ENCODE measurements at regions of chr14 and their contacts with region 1.

Region 1: DNA sequence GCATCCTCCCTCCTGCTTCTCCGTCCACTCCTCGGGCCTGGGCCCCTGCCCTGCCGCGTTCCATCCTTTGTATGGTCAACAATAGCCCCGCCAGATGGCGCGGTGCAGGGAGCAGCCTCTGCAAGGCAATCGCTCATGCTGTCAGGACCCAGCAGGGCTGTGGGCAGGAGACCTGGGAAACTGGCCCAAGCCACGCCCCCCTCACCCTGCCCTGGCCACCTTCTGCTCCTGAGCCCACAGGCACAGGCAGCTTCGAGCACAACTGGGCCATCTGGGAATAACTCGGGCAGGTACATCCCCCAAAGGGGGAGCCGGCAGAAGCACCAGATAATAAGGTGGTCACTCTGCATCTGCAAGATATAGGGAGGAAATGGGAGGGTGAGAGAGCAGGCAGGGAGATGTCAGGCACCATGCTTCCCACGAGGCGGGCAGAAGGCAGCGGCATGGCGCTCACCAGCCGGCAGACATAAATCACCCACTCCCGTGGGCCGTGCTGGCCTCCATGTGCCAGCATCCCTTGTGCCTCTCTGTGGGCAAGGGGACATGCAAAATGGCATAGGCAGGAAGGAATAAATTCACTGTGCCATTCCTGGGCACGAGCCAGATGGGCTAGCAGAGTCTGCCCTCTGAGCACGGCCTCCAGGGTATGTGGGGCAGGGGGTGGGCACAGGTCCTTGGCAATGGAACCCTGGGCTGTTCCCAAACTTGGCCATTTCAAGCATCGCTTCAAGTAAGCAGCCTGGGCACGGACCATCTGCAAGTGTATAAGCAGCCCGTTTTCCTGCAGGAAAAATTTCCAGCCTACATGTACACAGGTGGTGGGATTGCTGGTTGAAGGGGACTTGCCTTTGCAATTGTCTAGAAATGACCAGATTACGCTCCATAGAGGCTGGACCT is 40.5 kb downstream of the CCDC85C start:
- H3K4me3 ChIP-seq: no peak overlapping the region
- H3K27ac ChIP-seq: no peak overlapping the region
- H3K4me1 ChIP-seq: peaks cover 29% of the 10 kb centered on the region
- CTCF ChIP-seq: peak; percentile 78

Region 2: DNA sequence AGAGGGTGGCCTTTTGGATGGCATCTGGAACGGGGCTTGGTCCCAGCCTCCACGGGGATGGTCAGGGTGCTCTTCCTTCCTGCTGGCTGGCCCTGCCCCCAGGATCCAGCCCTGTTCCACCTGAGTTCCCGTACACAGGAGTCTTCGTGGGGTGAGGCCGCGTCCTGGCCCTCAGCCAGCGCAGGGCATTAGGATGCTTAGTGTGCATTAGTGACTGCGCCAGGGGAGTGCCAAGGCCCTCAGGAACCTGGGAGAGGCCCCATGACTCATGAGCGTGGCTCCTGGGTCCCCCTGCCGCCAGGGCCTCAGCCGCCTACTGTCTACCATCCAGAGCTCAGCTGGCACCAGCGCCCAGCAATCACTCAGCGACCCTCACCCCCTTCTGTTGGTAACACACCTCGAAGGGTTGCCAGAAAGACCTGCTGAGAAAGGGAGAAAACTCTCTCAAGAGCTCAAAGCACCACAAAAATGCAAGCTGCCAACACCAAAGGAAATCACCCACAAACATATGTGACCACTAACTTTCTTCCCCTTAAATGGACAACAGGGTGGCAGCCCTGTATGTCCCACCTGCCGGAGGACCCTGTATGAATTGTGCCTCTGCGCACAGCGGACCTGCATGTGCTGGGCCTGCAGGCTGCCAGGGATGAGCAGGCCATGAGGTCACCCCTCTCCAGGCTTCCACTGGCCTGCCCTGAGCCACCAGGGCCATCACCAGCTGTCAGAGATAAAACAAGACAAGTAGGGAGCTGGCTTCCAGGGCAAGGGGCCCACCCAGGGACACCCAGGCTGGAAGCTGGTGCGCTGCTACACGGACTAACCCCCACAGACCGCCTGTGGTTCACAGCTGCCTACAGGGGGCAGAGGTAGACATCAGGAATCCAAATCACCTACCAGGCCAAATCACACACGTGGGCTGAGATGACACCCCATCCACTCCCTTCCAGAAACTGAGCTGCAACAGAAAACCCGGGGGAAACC is 11.9 kb after region 1 on chr14:
- CTCF ChIA-PET with region 1: interaction called, 12 read pairs
- POLR2A ChIA-PET with region 1: interaction called, 5 read pairs
- H3K4me3 ChIP-seq: no peak overlapping the region
- H3K27ac ChIP-seq: peak overlapping the region; percentile 38; the same call in 1 of the 2 replicates
- H3K4me1 ChIP-seq: peaks cover 52% of the 10 kb centered on the region
- CTCF ChIP-seq: 0 out of 2 replicates have a peak, but pooled peaks have one; percentile 35

Measured in HEK293 (cell line).